Activated CD4-positive, alpha-beta memory T cell treated with anti-CD3 and anti-CD28 coated beads for 36 hours (primary cell): ENCODE measurements at regions of chr13 and their contacts with region 1.

Region 1: GRCh38 chr13:33678906-33679657 is 138.9 kb upstream of the RFC3 start:
- DNase-seq: peak; percentile 93
- H3K4me3 Mint-ChIP-seq: peak overlapping the region; percentile 81
- H3K27ac Mint-ChIP-seq: peak overlapping the region; percentile 98
- H3K4me1 Mint-ChIP-seq: peaks cover 46% of the 10 kb centered on the region
- H3K27me3 Mint-ChIP-seq: no peaks in the 10 kb centered on the region

Region 2: GRCh38 chr13:32427852-32428580 is 1251.1 kb before region 1 on chr13 and contains the start of gene N4BP2L1:
- CTCF ChIA-PET with region 1: no interaction called
- POLR2A ChIA-PET with region 1: interaction called, 3 read pairs
- intact Hi-C with region 1: loop called (anchors 5 kb)
- DNase-seq: peak; percentile 94
- H3K4me3 Mint-ChIP-seq: peak within 1 kb of the TSS; percentile 88
- H3K27ac Mint-ChIP-seq: peak within 1 kb of the TSS; percentile 96
- H3K4me1 Mint-ChIP-seq: peaks cover 38% of the 10 kb centered on the region
- H3K27me3 Mint-ChIP-seq: no peaks in the 10 kb centered on the region
- total RNA-seq, gene N4BP2L1: 22.1 to 24.0 TPM

Region 3: DNA sequence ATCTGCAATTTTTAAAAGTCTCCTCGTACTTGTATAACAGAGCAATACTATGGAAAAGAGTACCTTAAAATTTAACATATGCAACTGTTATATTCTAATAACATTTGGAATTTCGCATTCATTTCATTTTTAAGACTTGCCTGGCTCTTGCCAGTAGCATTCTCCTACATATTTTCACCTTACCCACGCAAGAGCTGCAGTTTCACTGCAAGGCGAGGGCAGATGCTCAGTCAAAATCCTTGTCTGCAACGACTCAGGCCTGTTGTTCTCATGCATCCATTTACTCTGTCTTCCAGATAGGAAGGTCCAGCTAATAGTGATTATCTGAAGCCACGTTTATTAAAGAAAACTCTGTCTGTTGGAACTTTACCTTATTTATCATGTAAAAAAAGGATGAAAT is 88.1 kb before region 1 on chr13:
- CTCF ChIA-PET with region 1: no interaction called
- POLR2A ChIA-PET with region 1: no interaction called
- intact Hi-C with region 1: no loop called
- DNase-seq: no peak
- H3K4me3 Mint-ChIP-seq: no peak overlapping the region
- H3K27ac Mint-ChIP-seq: no peak overlapping the region
- H3K4me1 Mint-ChIP-seq: no peaks in the 10 kb centered on the region
- H3K27me3 Mint-ChIP-seq: no peaks in the 10 kb centered on the region

Region 4: GRCh38 chr13:33639626-33640080 is 39.4 kb before region 1 on chr13:
- CTCF ChIA-PET with region 1: no interaction called
- POLR2A ChIA-PET with region 1: interaction called, 9 read pairs
- intact Hi-C with region 1: loop called (anchors 1 kb)
- DNase-seq: peak; percentile 82
- H3K4me3 Mint-ChIP-seq: no peak overlapping the region
- H3K27ac Mint-ChIP-seq: peak overlapping the region; percentile 92
- H3K4me1 Mint-ChIP-seq: peaks cover 57% of the 10 kb centered on the region
- H3K27me3 Mint-ChIP-seq: no peaks in the 10 kb centered on the region

Region 5: DNA sequence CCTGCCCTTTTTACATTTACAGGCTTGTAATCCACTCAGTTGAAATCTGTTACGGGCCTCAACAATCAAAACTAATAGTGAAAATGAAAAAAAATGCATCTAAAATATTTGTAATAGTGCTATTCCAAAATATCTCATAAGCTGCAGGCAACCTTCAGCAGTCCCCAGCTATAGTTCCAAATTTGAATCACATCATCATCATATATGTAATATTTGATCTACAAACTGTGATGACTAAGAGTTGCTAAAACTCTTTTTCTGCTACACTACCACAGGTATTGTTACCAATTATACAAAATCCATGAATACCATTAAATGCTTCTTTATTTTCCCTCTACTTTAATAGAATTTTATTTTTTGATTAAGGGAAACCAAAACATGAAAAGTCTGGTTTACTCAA is 17.4 kb after region 1 on chr13:
- CTCF ChIA-PET with region 1: interaction called, 3 read pairs
- POLR2A ChIA-PET with region 1: no interaction called
- intact Hi-C with region 1: loop called (anchors 1 kb)
- DNase-seq: no peak
- H3K4me3 Mint-ChIP-seq: no peak overlapping the region
- H3K27ac Mint-ChIP-seq: no peak overlapping the region
- H3K4me1 Mint-ChIP-seq: peaks cover 13% of the 10 kb centered on the region
- H3K27me3 Mint-ChIP-seq: no peaks in the 10 kb centered on the region

Region 6: GRCh38 chr13:33817901-33818706 is 139.0 kb after region 1 on chr13 and contains the start of gene RFC3:
- CTCF ChIA-PET with region 1: no interaction called
- POLR2A ChIA-PET with region 1: interaction called, 4 read pairs
- intact Hi-C with region 1: loop called (anchors 1 kb)
- DNase-seq: peak; percentile 96
- H3K4me3 Mint-ChIP-seq: peak within 1 kb of the TSS; percentile 99
- H3K27ac Mint-ChIP-seq: peak within 1 kb of the TSS; percentile 62
- H3K4me1 Mint-ChIP-seq: peaks cover 34% of the 10 kb centered on the region
- H3K27me3 Mint-ChIP-seq: peaks cover 4% of the 10 kb centered on the region
- total RNA-seq, gene RFC3: 52.4 to 53.9 TPM